ENCODE measurements at regions of chr7 and their contacts with region 1.

Region 1: GRCh38 chr7:154927624-154928143 is 75.2 kb downstream of the PAXIP1 start:
- DNase-seq: peak; percentile 86
- H3K4me3 Mint-ChIP-seq: peak overlapping the region; percentile 97
- H3K27ac Mint-ChIP-seq: peak overlapping the region; percentile 93
- H3K4me1 Mint-ChIP-seq: peaks cover 5% of the 10 kb centered on the region
- H3K27me3 Mint-ChIP-seq: no peaks in the 10 kb centered on the region
- CTCF ChIP-seq: peak; percentile 74

Region 2: GRCh38 chr7:154519229-154519628 is 408.5 kb before region 1 on chr7:
- CTCF ChIA-PET with region 1: no interaction called
- POLR2A ChIA-PET with region 1: no interaction called
- intact Hi-C with region 1: no loop called
- DNase-seq: no peak
- H3K4me3 Mint-ChIP-seq: no peak overlapping the region
- H3K27ac Mint-ChIP-seq: no peak overlapping the region
- H3K4me1 Mint-ChIP-seq: no peaks in the 10 kb centered on the region
- H3K27me3 Mint-ChIP-seq: no peaks in the 10 kb centered on the region
- CTCF ChIP-seq: no peak

Region 3: DNA sequence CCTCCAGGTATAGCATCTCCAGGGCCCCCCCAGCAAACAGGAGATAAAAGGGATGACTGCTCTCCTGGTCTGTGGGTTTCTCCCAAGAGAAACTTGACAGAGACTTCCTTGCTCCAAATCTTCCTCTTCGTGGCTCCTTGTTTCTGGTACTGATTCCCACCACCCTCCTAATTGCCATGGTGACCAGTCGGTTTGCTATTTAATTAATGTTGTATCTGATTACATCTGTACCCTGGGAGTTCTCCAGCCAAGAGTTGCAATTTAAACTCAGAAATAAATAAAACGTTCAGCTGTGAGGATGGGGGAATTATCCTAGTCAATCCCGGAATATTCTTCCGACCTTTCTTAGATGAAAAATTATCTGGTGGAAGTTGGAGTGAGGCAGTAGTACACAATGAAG is 189.5 kb before region 1 on chr7:
- CTCF ChIA-PET with region 1: no interaction called
- POLR2A ChIA-PET with region 1: no interaction called
- intact Hi-C with region 1: no loop called
- DNase-seq: no peak
- H3K4me3 Mint-ChIP-seq: no peak overlapping the region
- H3K27ac Mint-ChIP-seq: no peak overlapping the region
- H3K4me1 Mint-ChIP-seq: no peaks in the 10 kb centered on the region
- H3K27me3 Mint-ChIP-seq: no peaks in the 10 kb centered on the region
- CTCF ChIP-seq: no peak

Region 4: DNA sequence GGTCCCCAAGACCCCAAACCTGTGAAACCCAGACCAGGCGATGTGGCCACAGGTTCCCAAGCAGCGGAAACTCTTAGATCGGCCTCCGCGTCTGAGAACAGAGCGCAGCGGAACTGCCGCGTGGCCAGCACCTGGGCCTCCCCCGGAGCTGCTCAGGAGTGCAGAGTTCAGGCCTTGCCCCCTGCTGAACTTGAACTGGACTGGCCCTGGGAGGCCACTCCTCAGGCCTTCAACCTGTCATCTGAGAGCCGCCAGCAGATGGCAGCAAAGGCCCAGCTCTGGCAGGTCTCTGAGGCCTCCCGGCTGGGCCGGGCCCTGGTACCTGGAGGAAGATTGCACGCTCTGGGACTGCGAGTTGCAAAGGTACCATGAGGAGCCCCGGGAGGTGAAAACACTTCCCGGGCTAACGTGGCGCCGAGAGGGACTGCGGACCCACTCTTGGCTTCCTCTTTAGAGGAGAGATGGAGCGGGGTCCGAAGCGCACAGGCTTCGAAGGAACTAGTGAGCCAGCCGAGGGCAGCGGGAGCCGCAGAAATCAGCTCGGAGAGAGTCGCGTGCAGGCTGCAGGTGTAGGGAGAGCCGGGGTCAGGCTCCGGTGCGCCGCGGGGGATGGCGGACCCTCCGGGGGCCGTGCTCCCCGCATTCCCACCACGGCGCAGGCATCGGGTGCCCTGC is 13.9 kb before region 1 on chr7:
- CTCF ChIA-PET with region 1: interaction called, 42 read pairs
- POLR2A ChIA-PET with region 1: interaction called, 14 read pairs
- intact Hi-C with region 1: no loop called
- DNase-seq: peak; percentile 67
- H3K4me3 Mint-ChIP-seq: no peak overlapping the region
- H3K27ac Mint-ChIP-seq: no peak overlapping the region
- H3K4me1 Mint-ChIP-seq: no peaks in the 10 kb centered on the region
- H3K27me3 Mint-ChIP-seq: no peaks in the 10 kb centered on the region
- CTCF ChIP-seq: peak; percentile 88

Region 5: DNA sequence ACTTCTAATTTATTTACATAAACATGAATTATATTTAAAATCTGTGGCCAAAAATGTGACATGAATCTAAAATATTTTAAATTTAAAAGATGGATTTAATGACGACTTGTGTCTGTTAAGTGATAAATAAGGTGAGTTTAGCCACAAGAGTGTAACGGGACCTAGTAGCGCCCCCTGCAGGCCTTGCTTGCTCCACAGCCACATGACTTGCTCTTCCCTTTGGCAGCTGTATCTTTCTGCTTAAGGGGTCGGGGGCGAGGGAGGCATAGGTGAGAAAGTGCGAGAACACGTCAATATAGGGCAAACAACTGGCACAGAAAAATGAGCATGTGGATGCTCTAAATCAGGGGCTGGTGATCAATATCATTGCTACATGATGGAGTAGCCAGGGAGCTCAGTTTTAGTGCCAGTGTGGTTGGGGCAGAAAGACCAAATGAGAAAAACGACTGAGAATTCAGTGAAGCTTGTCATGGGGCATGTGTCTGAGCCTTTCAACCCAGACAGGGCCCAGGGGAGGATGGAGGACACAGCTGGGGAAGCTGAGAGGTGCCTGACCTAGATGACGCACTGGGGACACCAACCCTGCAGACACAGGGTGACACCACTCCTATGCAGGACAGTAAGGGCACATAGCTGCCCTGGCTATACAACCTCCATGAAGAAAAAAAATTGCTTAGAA is 25.5 kb after region 1 on chr7:
- CTCF ChIA-PET with region 1: interaction called, 30 read pairs
- POLR2A ChIA-PET with region 1: interaction called, 6 read pairs
- intact Hi-C with region 1: no loop called
- DNase-seq: peak; percentile 56
- H3K4me3 Mint-ChIP-seq: no peak overlapping the region
- H3K27ac Mint-ChIP-seq: no peak overlapping the region
- H3K4me1 Mint-ChIP-seq: no peaks in the 10 kb centered on the region
- H3K27me3 Mint-ChIP-seq: no peaks in the 10 kb centered on the region
- CTCF ChIP-seq: peak; percentile 41

Region 6: GRCh38 chr7:155003376-155004214 is 75.9 kb after region 1 on chr7:
- CTCF ChIA-PET with region 1: interaction called, 6 read pairs
- POLR2A ChIA-PET with region 1: interaction called, 4 read pairs
- intact Hi-C with region 1: loop called (anchors 2 kb)
- DNase-seq: peak; percentile 76
- H3K4me3 Mint-ChIP-seq: peak overlapping the region; percentile 88
- H3K27ac Mint-ChIP-seq: peak overlapping the region; percentile 87
- H3K4me1 Mint-ChIP-seq: no peaks in the 10 kb centered on the region
- H3K27me3 Mint-ChIP-seq: no peaks in the 10 kb centered on the region
- CTCF ChIP-seq: no peak

Region 7: DNA sequence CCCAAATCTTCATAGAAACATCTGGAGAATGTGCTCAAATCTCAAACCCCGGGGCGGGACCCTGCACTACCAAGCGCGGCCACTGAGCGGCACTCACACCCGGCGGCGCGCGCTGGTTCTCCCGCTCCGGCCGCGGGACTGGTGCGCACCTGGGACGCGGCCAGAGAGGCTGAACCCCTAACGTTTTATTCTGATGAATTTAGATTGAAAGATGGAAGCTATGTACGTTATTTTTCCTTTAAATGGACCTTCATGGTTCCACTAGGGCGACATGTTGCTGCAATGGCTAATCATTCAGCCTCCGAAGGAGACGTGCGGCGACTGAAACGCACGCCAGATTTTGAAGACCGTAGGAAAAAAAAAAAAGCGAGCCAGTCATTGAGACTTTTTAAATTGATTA is 263.0 kb after region 1 on chr7:
- CTCF ChIA-PET with region 1: interaction called, 8 read pairs
- POLR2A ChIA-PET with region 1: no interaction called
- intact Hi-C with region 1: loop called (anchors 2 kb)
- DNase-seq: peak; percentile 46
- H3K4me3 Mint-ChIP-seq: no peak overlapping the region
- H3K27ac Mint-ChIP-seq: no peak overlapping the region
- H3K4me1 Mint-ChIP-seq: peaks cover 5% of the 10 kb centered on the region
- H3K27me3 Mint-ChIP-seq: no peaks in the 10 kb centered on the region
- CTCF ChIP-seq: peak; percentile 85

Region 8: GRCh38 chr7:155738652-155739537 is 811.2 kb after region 1 on chr7:
- CTCF ChIA-PET with region 1: interaction called, 4 read pairs
- POLR2A ChIA-PET with region 1: no interaction called
- intact Hi-C with region 1: loop called (anchors 10 kb)
- DNase-seq: peak; percentile 83
- H3K4me3 Mint-ChIP-seq: no peak overlapping the region
- H3K27ac Mint-ChIP-seq: no peak overlapping the region
- H3K4me1 Mint-ChIP-seq: no peaks in the 10 kb centered on the region
- H3K27me3 Mint-ChIP-seq: no peaks in the 10 kb centered on the region
- CTCF ChIP-seq: peak; percentile 59